Heart right ventricle (tissue), 16 donors: ENCODE measurements at regions of chr4 and their contacts with region 1.

Region 1: GRCh38 chr4:174549721-174550120 is 27.4 kb upstream of the HPGD start:
- DNase-seq: no peak
- ATAC-seq: no peak
- H3K4me3 ChIP-seq: no peak overlapping the region
- H3K27ac ChIP-seq: no peak overlapping the region
- H3K4me1 ChIP-seq: no peaks in the 10 kb centered on the region
- H3K27me3 ChIP-seq: no peaks in the 10 kb centered on the region
- CTCF ChIP-seq: no peak

Region 2: GRCh38 chr4:173807347-173807746 is 742.4 kb before region 1 on chr4:
- intact Hi-C with region 1: loop called in 1 of 10 experiments (anchors 10 kb)
- DNase-seq: peak in 1 of 2 donors; percentile 7
- ATAC-seq: peak in 4 of 8 donors; percentile 43 to 87 (median 80)
- H3K4me3 ChIP-seq: no peak overlapping the region
- H3K27ac ChIP-seq: no peak overlapping the region
- H3K4me1 ChIP-seq: no peaks in the 10 kb centered on the region
- H3K27me3 ChIP-seq: no peaks in the 10 kb centered on the region
- CTCF ChIP-seq: no peak